Panc1 (cell line): ENCODE measurements at regions of chr11 and their contacts with region 1.

Region 1: DNA sequence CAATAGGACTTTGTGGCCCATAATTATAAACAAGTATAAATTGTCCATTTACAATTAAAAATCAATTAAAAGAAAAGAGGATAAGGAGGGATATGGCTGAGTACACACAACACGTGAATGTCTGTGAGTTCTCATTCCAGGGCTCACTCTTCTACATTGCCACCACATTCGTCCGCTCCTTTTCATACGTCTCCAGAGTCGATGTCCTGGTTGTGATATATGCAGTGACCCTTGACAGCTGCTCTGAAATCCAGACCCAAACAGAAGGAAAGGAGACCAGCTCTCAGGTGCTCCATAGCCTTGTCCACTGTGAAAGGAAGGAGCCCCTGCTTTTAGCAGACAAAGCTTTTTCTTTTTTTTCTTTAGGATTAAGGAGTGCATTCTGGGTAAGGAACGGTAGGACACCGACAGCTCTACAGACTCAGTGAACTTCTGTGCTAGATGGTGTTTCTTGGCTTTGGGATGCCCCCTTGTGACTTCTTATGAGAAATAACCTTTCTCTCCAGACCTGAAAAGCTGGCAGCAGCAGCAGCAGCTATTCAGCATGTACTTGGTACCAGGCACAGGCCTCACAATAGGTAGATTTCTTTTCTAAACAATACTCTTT is 19.7 kb upstream of the DNAJB13 start:
- DNase-seq: peak; percentile 46
- ATAC-seq: peak; percentile 99
- H3K4me3 ChIP-seq: no peak overlapping the region
- H3K27ac ChIP-seq: no peak overlapping the region
- H3K4me1 ChIP-seq: no peaks in the 10 kb centered on the region
- H3K27me3 ChIP-seq: no peaks in the 10 kb centered on the region
- CTCF ChIP-seq: peak; percentile 83

Region 2: GRCh38 chr11:73760679-73761402 is 170.3 kb before region 1 on chr11 and contains the start of gene RAB6A:
- CTCF ChIA-PET with region 1: no interaction called
- POLR2A ChIA-PET with region 1: no interaction called
- in situ Hi-C with region 1: no loop called
- intact Hi-C with region 1: loop called (anchors 10 kb)
- DNase-seq: peak; percentile 95
- ATAC-seq: peak; percentile 95
- H3K4me3 ChIP-seq: peak within 1 kb of the TSS; percentile 58 to 85
- H3K27ac ChIP-seq: peak within 1 kb of the TSS; percentile 89
- H3K4me1 ChIP-seq: peaks cover 19% of the 10 kb centered on the region; the same call in 1 of the 2 replicates
- H3K27me3 ChIP-seq: no peaks in the 10 kb centered on the region; the same call in 1 of the 2 replicates
- CTCF ChIP-seq: no peak
- total RNA-seq, gene RAB6A: 149 TPM

Region 3: GRCh38 chr11:73916435-73916834 is 14.7 kb before region 1 on chr11:
- CTCF ChIA-PET with region 1: interaction called, 11 read pairs
- POLR2A ChIA-PET with region 1: no interaction called
- in situ Hi-C with region 1: no loop called
- intact Hi-C with region 1: no loop called
- DNase-seq: no peak
- ATAC-seq: no peak
- H3K4me3 ChIP-seq: no peak overlapping the region
- H3K27ac ChIP-seq: no peak overlapping the region
- H3K4me1 ChIP-seq: no peaks in the 10 kb centered on the region
- H3K27me3 ChIP-seq: no peaks in the 10 kb centered on the region
- CTCF ChIP-seq: no peak

Region 4: GRCh38 chr11:73982969-73983740 is 52.0 kb after region 1 on chr11:
- CTCF ChIA-PET with region 1: no interaction called
- POLR2A ChIA-PET with region 1: no interaction called
- in situ Hi-C with region 1: no loop called
- intact Hi-C with region 1: no loop called
- DNase-seq: peak; percentile 80
- ATAC-seq: peak; percentile 96
- H3K4me3 ChIP-seq: peak overlapping the region; percentile 69 to 85
- H3K27ac ChIP-seq: peak overlapping the region; percentile 96
- H3K4me1 ChIP-seq: peaks cover 24% of the 10 kb centered on the region
- H3K27me3 ChIP-seq: no peaks in the 10 kb centered on the region
- CTCF ChIP-seq: no peak